GM10248 (cell line): ENCODE measurements at regions of chr3 and their contacts with region 1.

Region 1: DNA sequence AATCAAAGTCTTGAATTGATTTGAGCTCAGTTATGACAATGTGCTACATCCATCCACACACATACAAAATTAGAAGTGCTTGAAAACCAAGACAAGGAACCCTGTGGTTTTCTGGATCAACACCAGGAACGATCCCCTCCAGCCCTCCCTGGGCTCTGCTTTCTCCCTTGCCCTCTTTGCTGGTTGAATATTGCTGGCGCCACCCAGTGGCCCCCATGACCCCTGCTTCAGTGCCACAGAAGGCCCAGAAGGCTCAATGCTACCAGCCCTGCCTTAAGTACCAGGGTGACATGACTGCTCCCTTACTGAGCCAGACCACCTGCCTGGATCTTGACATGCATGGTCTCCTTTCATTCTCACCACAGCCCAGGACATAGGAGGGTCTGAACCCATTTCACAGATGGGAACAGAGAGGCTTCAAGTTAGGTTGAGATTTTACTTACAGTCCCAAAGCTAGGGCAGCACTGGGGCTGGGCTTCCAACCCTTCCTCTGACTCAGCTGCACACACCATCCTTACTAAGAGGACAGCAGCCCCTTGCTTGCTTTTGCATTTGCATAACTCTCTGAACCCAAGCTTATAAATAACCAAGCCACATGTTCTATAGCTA is 15.0 kb downstream of the IL12A start:
- DNase-seq: peak; percentile 60
- CTCF ChIP-seq: peak; percentile 84

Region 2: DNA sequence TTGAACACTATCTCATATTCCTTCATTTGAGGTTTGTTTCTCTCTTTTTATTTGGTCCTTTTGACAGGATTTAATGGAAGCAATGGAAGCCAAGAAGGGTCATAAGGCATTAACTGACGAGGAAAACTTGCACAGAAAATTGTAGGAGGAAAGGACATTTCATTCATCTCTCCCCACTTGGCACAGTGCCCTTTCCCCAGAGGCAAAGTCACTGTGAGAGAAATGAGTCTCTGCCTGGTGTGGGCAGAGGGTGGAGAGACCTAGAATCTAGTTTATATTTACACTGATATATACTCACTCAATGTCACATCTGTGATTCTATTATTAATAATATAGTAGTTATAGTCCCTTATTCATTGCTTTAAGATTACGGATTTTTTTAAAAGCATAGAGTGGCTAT is 339.6 kb before region 1 on chr3:
- CTCF ChIA-PET with region 1: no interaction called
- POLR2A ChIA-PET with region 1: no interaction called
- DNase-seq: no peak
- CTCF ChIP-seq: no peak

Region 3: GRCh38 chr3:159828542-159828943 is 175.1 kb before region 1 on chr3:
- CTCF ChIA-PET with region 1: interaction called, 44 read pairs
- POLR2A ChIA-PET with region 1: no interaction called
- DNase-seq: peak; percentile 47
- CTCF ChIP-seq: peak; percentile 38

Region 4: DNA sequence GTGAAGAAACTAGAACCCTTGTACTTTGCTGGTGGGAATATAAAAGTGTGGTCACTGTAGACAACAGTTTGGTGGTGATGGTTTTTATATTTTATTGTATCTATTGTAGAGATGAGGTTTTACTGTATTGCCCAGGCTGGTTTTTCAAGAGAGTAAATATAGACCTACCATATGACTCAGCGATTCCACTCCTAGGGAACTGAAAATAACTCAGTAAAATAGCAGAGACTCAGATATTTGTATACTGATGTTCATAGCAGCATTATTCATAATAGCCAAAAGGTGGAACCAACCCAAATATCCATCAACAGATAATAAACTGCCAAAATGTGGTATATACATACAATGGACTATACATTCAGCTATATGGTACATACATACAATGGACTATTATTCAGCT is 83.8 kb before region 1 on chr3:
- CTCF ChIA-PET with region 1: interaction called, 11 read pairs
- POLR2A ChIA-PET with region 1: no interaction called
- DNase-seq: no peak
- CTCF ChIP-seq: no peak

Region 5: GRCh38 chr3:159978353-159978752 is 25.3 kb before region 1 on chr3:
- CTCF ChIA-PET with region 1: interaction called, 18 read pairs
- POLR2A ChIA-PET with region 1: no interaction called
- DNase-seq: peak; percentile 28
- CTCF ChIP-seq: no peak

Region 6: DNA sequence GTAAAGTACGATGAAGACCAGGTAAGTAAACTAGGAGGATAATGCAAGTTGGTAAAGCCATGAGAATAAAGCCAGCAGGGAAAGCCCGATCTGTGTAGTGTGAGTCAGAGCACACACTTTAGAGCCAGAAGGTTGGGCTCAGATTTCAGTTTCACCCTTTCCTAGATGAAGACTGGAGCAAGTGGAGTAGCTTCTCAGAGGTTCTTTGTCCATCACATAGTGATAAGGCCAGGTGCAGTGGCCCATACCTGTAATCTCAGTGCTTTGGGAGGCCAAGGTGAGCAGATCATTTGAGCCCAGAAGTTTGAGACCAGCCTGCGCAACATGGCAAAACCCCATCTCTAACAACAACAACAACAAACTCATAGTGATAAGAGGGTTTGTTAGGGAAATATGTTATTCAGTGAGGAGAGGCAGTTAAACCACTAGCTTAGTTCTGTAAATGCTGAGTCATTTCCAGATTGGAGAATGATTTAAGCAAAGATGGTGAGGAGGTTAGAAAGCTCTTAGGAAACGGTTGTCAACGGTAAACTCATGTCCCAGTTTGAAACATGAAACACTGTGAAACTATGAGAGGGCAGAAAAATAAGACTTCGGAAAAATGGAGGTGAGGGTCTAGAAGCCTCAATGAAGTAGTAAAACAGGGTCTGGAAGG is 24.0 kb after region 1 on chr3:
- CTCF ChIA-PET with region 1: interaction called, 10 read pairs
- POLR2A ChIA-PET with region 1: no interaction called
- DNase-seq: peak; percentile 53
- CTCF ChIP-seq: no peak